ENCODE measurements at regions of chr16 and their contacts with region 1.

Region 1: DNA sequence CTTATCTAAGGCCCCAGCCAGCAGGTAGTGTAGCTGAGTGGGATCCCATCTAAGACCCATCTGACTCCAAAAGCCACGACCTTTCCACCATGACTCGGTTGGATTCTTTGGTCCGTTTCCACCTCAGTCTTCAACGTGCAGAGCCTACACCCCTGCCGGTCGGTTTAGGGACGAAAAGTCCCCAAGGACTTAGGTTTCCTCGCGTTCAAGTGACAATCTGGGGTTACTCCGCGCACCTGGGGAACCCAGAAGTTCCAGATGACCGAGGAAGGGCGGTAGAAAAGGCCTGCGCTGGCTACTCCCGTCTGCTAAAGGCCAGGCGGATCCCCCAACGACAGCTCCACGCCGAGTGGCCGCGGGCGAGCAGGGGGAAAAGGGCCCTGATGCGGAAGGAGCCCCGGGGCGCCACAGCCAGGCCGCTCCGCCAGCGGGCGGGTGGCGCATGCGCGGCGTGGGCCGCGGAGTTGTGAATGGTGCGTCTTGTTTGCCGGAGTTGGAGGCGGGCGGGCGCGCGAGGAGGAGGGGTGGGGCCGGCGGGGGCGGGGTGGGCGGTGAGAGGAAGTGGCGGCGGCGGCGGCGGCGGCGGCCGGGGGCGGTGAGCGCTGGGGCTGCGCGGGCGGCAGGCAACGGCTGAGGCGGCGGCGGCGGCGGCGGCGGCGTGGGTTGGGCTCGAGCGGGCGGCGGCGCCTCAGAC is at the start of gene CBFB:
- DNase-seq: peak; percentile 95
- ATAC-seq: peak; percentile 90
- H3K4me3 Mint-ChIP-seq: peak within 1 kb of the TSS; percentile 87
- H3K27ac Mint-ChIP-seq: peak within 1 kb of the TSS; percentile 90
- H3K4me1 Mint-ChIP-seq: peaks cover 34% of the 10 kb centered on the region
- H3K27me3 Mint-ChIP-seq: no peaks in the 10 kb centered on the region
- total RNA-seq, gene CBFB: 84.6 to 90.2 TPM

Region 2: DNA sequence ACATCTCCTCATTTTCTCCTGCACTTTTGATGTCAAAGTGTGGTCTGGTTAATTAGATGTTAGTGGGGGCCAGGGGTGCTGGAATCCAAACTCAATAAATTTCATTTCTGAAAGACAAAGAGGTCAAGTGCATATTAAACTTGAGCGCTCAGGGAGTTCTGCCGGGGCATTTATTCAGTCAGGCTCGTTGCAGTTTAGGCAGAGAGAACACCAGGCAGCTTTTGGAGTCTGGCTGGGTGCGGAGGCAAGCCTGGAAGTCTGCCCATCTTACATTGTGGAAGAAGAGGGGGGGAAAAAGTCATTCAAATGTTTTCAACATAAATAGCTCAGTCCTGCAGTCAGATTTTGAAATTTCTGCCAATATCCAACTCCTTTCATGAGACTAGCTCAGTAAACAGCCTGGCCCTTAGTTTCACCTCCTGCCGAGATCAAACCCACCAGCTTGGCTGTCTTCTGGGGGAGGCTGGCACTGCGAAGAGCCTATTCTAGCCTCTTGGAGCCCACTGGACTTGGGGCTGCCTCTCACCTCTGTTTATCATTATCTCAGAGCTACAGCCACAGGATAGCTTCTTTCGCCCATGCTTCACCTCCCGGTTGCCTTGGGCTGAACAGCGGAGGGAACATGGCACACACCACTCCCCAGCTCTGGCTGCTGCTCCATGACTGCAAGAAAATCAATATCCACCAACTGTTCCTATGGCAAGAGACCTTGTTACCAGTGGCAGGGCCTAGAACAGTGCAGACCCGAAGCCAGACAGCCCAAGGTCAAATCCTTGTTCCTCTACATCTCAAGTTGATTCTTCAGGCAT is 839.6 kb before region 1 on chr16:
- CTCF ChIA-PET with region 1: no interaction called
- POLR2A ChIA-PET with region 1: no interaction called
- intact Hi-C with region 1: no loop called
- DNase-seq: no peak
- ATAC-seq: no peak
- H3K4me3 Mint-ChIP-seq: no peak overlapping the region
- H3K27ac Mint-ChIP-seq: no peak overlapping the region
- H3K4me1 Mint-ChIP-seq: no peaks in the 10 kb centered on the region
- H3K27me3 Mint-ChIP-seq: peaks cover 28% of the 10 kb centered on the region

Region 3: GRCh38 chr16:66696669-66697630 is 331.8 kb before region 1 on chr16 and contains the start of gene CMTM4:
- CTCF ChIA-PET with region 1: no interaction called
- POLR2A ChIA-PET with region 1: no interaction called
- intact Hi-C with region 1: loop called in 1 of 2 experiments (anchors 1 kb)
- DNase-seq: peak; percentile 87
- ATAC-seq: peak; percentile 96
- H3K4me3 Mint-ChIP-seq: peak within 1 kb of the TSS; percentile 73
- H3K27ac Mint-ChIP-seq: no peak within 1 kb of the TSS
- H3K4me1 Mint-ChIP-seq: peaks cover 12% of the 10 kb centered on the region
- H3K27me3 Mint-ChIP-seq: peaks cover 10% of the 10 kb centered on the region
- total RNA-seq, gene CMTM4: 3.3 to 4.5 TPM

Region 4: GRCh38 chr16:66988197-66988788 is 40.4 kb before region 1 on chr16 and contains the start of gene CES4A:
- CTCF ChIA-PET with region 1: interaction called, 9 read pairs
- POLR2A ChIA-PET with region 1: no interaction called
- intact Hi-C with region 1: loop called in 1 of 2 experiments (anchors 2 kb)
- DNase-seq: peak; percentile 47
- ATAC-seq: no peak
- H3K4me3 Mint-ChIP-seq: peak within 1 kb of the TSS; percentile 1
- H3K27ac Mint-ChIP-seq: peak within 1 kb of the TSS; percentile 75
- H3K4me1 Mint-ChIP-seq: peaks cover 30% of the 10 kb centered on the region
- H3K27me3 Mint-ChIP-seq: no peaks in the 10 kb centered on the region
- total RNA-seq, gene CES4A: 13.5 to 15.7 TPM

Region 5: GRCh38 chr16:67055712-67056487 is 27.2 kb after region 1 on chr16:
- CTCF ChIA-PET with region 1: interaction called, 4 read pairs
- POLR2A ChIA-PET with region 1: no interaction called
- intact Hi-C with region 1: loop called (anchors 1 to 2 kb)
- DNase-seq: peak; percentile 34
- ATAC-seq: peak; percentile 89
- H3K4me3 Mint-ChIP-seq: peak overlapping the region; percentile 6
- H3K27ac Mint-ChIP-seq: peak overlapping the region; percentile 84
- H3K4me1 Mint-ChIP-seq: peaks cover 50% of the 10 kb centered on the region
- H3K27me3 Mint-ChIP-seq: no peaks in the 10 kb centered on the region

Region 6: DNA sequence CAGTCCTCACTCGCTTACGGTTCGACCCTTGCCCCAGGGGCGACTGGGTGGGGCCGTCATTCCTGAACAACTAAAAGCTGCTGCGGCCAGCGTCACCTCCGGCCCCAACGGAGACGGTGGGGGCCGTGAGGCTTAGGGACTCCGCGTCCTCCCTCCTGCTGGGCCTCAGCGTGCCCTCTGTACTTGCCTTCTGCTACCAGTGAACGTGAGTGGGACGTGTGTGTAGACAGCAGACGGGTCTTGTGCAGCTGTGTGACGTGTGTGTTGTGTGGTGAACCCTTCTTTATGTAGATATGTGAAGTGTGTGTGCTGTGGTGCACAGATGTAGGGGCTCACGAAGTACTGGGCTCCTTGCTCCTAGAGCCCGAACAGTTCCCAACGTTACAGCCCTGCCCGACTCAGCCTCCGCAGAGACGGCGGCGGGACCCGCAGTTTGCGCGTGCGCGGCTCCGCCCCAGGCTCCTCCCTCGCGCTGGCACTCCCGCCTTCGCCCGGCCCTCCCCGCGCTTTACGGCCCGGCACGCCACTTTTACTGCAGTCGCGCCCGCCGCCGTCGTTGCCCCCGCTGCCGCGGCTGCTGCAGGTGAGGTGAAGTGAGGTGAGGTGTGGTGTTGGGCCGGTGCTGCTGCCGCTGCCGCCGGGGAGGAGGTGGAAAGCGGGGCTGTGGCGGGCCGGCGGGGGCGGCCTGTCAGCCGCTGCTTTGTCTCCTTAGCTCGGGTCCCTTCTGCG is 80.9 kb after region 1 on chr16 and contains the start of gene PHAF1:
- CTCF ChIA-PET with region 1: interaction called, 4 read pairs
- POLR2A ChIA-PET with region 1: no interaction called
- intact Hi-C with region 1: loop called in 1 of 2 experiments (anchors 1 kb)
- DNase-seq: peak; percentile 98
- ATAC-seq: peak; percentile 94
- H3K4me3 Mint-ChIP-seq: peak within 1 kb of the TSS; percentile 94
- H3K27ac Mint-ChIP-seq: peak within 1 kb of the TSS; percentile 85
- H3K4me1 Mint-ChIP-seq: peaks cover 24% of the 10 kb centered on the region
- H3K27me3 Mint-ChIP-seq: no peaks in the 10 kb centered on the region
- total RNA-seq, gene PHAF1: 12.7 to 14.0 TPM

Region 7: DNA sequence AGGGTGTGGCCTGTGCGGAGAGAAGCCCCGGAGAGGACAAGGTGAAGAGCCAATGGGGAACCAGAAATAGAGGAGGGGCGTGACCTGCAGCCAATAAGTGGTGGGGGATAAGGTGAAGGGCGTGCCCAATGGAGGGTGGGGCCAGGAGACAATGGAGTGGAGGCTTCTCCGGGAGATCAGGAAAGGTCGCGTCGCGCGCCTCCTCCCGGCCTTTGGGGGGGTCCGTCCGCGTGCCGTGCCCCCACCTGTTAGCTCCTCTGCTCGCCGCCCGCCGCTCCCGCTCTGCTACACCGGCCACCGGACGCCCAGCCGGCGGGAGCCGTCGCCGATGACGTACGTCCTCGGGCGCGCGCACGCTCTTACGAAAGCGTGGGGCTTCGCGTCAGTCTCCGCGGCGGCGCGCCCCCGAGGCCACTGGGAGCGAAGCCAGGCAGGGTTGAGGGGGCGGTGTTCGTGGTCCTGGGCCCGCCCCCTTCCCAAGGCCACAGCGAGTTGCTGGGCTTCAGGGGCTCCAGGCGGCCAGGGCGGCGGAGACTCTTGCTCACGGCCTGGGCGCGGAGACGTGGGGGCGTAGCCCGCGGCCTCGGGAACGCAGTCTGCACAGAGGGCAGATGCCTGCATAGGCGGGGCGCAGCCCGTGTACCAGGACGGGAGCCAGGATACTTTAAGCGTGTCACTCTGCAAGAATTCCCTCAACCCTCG is 155.1 kb after region 1 on chr16 and contains the start of gene MATCAP1:
- CTCF ChIA-PET with region 1: interaction called, 5 read pairs
- POLR2A ChIA-PET with region 1: no interaction called
- intact Hi-C with region 1: loop called in 1 of 2 experiments (anchors 2 kb)
- DNase-seq: peak; percentile 96
- ATAC-seq: peak; percentile 97
- H3K4me3 Mint-ChIP-seq: no peak within 1 kb of the TSS
- H3K27ac Mint-ChIP-seq: no peak within 1 kb of the TSS
- H3K4me1 Mint-ChIP-seq: peaks cover 15% of the 10 kb centered on the region
- H3K27me3 Mint-ChIP-seq: peaks cover 9% of the 10 kb centered on the region
- total RNA-seq, gene MATCAP1: 28.8 to 30.4 TPM